ENCODE measurements at regions of chr15 and their contacts with region 1.

Region 1: DNA sequence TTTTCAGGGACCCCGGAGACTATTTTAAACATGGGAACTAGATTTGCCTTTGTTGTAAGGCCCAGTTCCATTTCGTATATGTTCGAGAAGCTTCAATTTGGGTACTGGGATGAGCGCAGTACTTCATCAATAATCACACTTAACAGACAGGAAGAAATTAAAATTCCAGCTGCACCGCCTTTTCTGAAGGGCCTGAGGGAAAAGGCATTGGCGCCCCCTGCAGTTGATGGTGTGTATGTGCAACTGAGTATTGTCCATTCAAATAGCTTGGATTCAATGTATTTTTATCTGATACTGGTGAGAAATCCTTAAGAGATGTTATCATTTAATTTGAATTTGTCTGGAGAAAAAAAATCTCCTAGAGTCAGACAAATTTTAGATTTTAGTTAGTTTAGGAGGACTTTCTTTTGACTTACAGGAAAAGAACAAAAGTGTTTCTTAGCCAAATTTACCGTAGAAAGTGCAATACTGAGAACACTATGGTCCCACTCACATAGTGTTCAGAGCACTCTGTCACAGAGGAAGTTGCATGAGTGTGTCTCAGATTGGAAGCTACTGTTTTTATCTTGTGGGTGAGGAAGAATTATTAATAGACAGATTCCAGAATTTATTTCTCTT is 5.4 kb upstream of the ALDH1A2 start:
- DNase-seq: peak in 1 of 2 experiments; percentile 56
- H3K4me3 ChIP-seq: no peak overlapping the region
- H3K4me3 Mint-ChIP-seq: no peak overlapping the region
- H3K27ac Mint-ChIP-seq: no peak overlapping the region
- H3K4me1 ChIP-seq: no peaks in the 10 kb centered on the region
- H3K4me1 Mint-ChIP-seq: no peaks in the 10 kb centered on the region
- H3K27me3 ChIP-seq: no peaks in the 10 kb centered on the region
- H3K27me3 Mint-ChIP-seq: peaks cover 20% of the 10 kb centered on the region
- CTCF ChIP-seq: peak; percentile 77 to 85

Region 2: DNA sequence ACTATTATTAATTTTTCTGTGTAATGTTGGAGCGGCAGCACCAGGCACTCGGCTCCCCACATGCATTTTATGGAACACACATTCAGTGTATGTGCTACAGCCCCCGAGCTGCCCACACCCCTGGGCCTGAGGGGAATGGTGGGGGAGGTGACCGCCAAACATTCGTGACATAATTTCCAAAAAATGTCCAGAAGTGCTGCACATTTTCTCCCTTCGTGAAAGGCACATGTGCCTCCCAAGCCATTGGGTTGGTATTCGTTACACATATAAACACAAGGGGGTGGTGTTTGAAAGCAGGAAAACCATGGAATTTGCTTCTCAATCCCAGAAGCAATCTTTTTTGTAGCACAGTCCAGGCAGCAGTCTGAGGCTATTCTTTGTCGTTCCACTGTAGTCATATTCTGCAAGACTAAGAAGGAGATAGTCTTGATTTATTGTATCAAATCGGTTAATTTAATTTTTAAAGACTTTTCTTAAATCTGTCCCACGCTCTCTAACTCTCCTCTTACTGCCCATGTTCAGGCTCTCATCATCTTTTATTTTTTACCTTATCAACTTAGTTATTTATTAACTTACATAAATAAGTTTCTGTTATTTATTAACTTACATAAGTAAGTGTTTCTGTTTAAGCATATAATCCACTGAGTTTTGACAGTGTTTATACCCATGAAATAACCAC is 403.6 kb before region 1 on chr15:
- CTCF ChIA-PET with region 1: interaction called, 3 read pairs
- POLR2A ChIA-PET with region 1: no interaction called
- intact Hi-C with region 1: loop called (anchors 10 kb)
- DNase-seq: peak; percentile 47 to 65
- H3K4me3 ChIP-seq: peak overlapping the region; percentile 24
- H3K4me3 Mint-ChIP-seq: peak overlapping the region; percentile 41
- H3K27ac Mint-ChIP-seq: no peak overlapping the region
- H3K4me1 ChIP-seq: peaks cover 20% of the 10 kb centered on the region
- H3K4me1 Mint-ChIP-seq: peaks cover 9% of the 10 kb centered on the region
- H3K27me3 ChIP-seq: no peaks in the 10 kb centered on the region
- H3K27me3 Mint-ChIP-seq: no peaks in the 10 kb centered on the region
- CTCF ChIP-seq: peak; percentile 46 to 54

Region 3: DNA sequence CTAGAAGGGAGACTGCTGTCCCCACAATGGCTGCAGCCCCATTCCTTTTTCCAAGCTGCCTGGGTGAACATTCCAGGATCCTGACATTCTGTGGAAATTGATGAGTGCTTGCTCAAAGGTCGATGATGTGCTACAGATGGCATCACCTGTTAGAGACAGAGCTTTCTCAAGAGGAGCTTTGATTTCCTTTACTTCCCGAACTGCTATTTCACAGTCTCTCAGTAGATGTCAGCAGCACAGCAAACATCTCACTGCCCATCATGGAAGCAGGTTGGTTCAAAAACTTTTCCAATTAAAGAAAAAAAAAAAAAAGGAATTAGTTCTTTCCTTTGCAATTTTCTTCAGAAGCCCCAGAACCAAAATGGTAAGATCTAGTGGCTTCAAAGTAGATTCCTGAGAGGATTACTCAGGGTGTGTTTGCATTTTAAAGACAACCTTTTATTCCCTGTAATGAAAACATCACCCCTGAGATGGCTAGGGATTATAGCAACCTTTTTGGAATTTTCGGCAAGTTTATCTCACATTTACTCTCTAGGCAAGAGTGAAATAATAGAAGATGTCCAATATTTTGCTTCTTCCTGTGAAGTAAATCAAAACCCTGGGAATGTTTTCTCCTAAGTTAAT is 319.6 kb before region 1 on chr15:
- CTCF ChIA-PET with region 1: interaction called, 15 read pairs
- POLR2A ChIA-PET with region 1: no interaction called
- intact Hi-C with region 1: loop called (anchors 5 kb)
- DNase-seq: peak in 1 of 2 experiments; percentile 29
- H3K4me3 ChIP-seq: no peak overlapping the region
- H3K4me3 Mint-ChIP-seq: no peak overlapping the region
- H3K27ac Mint-ChIP-seq: no peak overlapping the region
- H3K4me1 ChIP-seq: no peaks in the 10 kb centered on the region
- H3K4me1 Mint-ChIP-seq: no peaks in the 10 kb centered on the region
- H3K27me3 ChIP-seq: no peaks in the 10 kb centered on the region
- H3K27me3 Mint-ChIP-seq: no peaks in the 10 kb centered on the region
- CTCF ChIP-seq: peak; percentile 51 to 62

Region 4: DNA sequence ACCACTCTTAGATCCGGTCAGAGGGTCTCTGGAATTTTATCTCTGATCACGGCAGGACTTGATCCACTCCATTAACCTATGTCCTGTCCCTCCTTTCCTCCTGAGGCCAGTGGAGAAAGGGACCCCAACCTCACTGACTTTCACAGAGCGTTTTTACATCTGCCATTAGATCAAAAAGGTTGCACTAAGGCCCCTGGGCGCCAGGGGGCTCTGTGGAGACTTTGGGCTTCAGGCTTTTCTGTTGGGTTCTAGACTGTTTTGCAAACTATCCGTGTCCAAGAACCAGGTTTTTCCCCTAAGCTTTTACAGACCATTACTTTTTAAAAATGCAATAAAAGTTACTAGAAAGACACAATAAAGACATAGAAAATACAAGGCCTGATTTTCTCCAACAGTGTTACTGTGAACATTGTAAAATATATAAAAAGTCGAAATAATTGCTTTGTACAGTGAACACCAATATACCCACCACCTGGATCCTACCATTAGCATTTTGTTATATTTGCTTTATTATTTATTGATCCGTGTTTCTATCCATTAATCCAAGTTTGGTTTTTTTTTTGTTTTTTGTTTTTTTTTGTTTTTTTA is 204.7 kb before region 1 on chr15:
- CTCF ChIA-PET with region 1: interaction called, 11 read pairs
- POLR2A ChIA-PET with region 1: no interaction called
- intact Hi-C with region 1: loop called (anchors 1 kb)
- DNase-seq: peak; percentile 47 to 70
- H3K4me3 ChIP-seq: no peak overlapping the region
- H3K4me3 Mint-ChIP-seq: no peak overlapping the region
- H3K27ac Mint-ChIP-seq: no peak overlapping the region
- H3K4me1 ChIP-seq: no peaks in the 10 kb centered on the region
- H3K4me1 Mint-ChIP-seq: no peaks in the 10 kb centered on the region
- H3K27me3 ChIP-seq: no peaks in the 10 kb centered on the region
- H3K27me3 Mint-ChIP-seq: peaks cover 15% of the 10 kb centered on the region
- CTCF ChIP-seq: peak; percentile 62 to 86

Region 5: GRCh38 chr15:57969354-57969753 is 101.6 kb before region 1 on chr15:
- CTCF ChIA-PET with region 1: interaction called, 12 read pairs
- POLR2A ChIA-PET with region 1: no interaction called
- intact Hi-C with region 1: loop called (anchors 1 kb)
- DNase-seq: peak in 1 of 2 experiments; percentile 30
- H3K4me3 ChIP-seq: no peak overlapping the region
- H3K4me3 Mint-ChIP-seq: no peak overlapping the region
- H3K27ac Mint-ChIP-seq: no peak overlapping the region
- H3K4me1 ChIP-seq: no peaks in the 10 kb centered on the region
- H3K4me1 Mint-ChIP-seq: no peaks in the 10 kb centered on the region
- H3K27me3 ChIP-seq: peaks cover 2% of the 10 kb centered on the region; the same call in 1 of the 2 replicates
- H3K27me3 Mint-ChIP-seq: peaks cover 11% of the 10 kb centered on the region
- CTCF ChIP-seq: peak; percentile 19 to 38

Region 6: GRCh38 chr15:58043192-58043903 is 27.6 kb before region 1 on chr15:
- CTCF ChIA-PET with region 1: interaction called, 3 read pairs
- POLR2A ChIA-PET with region 1: no interaction called
- intact Hi-C with region 1: loop called (anchors 2 kb)
- DNase-seq: peak in 1 of 2 experiments; percentile 41
- H3K4me3 ChIP-seq: no peak overlapping the region
- H3K4me3 Mint-ChIP-seq: no peak overlapping the region
- H3K27ac Mint-ChIP-seq: no peak overlapping the region
- H3K4me1 ChIP-seq: no peaks in the 10 kb centered on the region; the same call in 1 of the 2 replicates
- H3K4me1 Mint-ChIP-seq: no peaks in the 10 kb centered on the region
- H3K27me3 ChIP-seq: no peaks in the 10 kb centered on the region
- H3K27me3 Mint-ChIP-seq: peaks cover 16% of the 10 kb centered on the region
- CTCF ChIP-seq: peak; percentile 45 to 65

Region 7: GRCh38 chr15:58227706-58228543 is 157.0 kb after region 1 on chr15:
- CTCF ChIA-PET with region 1: no interaction called
- POLR2A ChIA-PET with region 1: no interaction called
- intact Hi-C with region 1: no loop called
- DNase-seq: peak; percentile 61 to 79
- H3K4me3 ChIP-seq: no peak overlapping the region
- H3K4me3 Mint-ChIP-seq: no peak overlapping the region
- H3K27ac Mint-ChIP-seq: no peak overlapping the region
- H3K4me1 ChIP-seq: peaks cover 5% of the 10 kb centered on the region; the same call in 1 of the 2 replicates
- H3K4me1 Mint-ChIP-seq: peaks cover 10% of the 10 kb centered on the region
- H3K27me3 ChIP-seq: no peaks in the 10 kb centered on the region
- H3K27me3 Mint-ChIP-seq: no peaks in the 10 kb centered on the region
- CTCF ChIP-seq: peak; percentile 81 to 85